Ovary (tissue), 10 donors: ENCODE measurements at regions of chr12 and their contacts with region 1.

Region 1: DNA sequence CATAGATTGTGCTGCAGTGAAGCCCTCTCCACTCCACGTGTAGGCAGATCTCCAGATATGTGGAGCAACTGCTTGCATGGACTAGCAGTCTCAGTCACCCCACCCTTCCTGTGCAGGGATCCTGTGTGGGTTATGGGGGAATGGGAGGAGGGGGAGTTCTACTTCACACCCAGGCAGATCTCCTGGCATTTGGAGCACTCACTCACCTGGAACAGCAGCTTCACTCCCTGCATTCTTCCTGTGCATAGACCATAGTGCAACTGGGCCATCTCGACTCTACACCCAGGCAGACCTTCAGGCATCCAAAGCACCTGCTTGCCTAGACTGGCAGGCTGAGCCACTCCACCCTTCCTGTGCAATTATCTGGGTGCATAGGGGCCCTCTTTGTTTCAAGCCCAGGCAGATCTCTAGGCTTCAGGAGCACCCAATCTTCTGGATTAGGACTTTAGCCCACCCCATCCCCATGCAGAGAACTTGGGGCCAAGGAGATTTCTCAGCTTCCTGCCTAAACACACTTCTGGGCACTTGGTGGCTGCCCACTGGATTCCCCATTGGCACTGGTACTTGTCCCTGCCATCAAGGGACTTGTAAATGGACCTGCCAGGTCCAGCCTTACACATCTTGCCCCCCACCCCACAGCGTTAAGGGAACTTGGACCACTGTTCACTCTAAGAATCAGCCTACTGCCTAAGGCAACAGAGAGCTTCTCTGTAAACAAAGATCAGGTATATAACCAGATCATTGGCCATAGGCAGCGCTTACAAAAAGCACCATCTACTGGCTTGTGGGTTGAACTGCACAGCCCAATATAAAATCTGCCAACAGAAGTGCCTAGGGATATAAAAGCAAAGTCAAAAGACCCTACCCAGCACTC is 95.8 kb upstream of the PCED1B start:
- DNase-seq: peak in 1 of 5 donors; percentile 27
- H3K4me3 ChIP-seq: no peak overlapping the region
- H3K27ac ChIP-seq: no peak overlapping the region
- H3K4me1 ChIP-seq: no peaks in the 10 kb centered on the region
- H3K27me3 ChIP-seq: no peaks in the 10 kb centered on the region
- CTCF ChIP-seq: peak in 1 of 3 donors; percentile 32
- EP300 ChIP-seq: no peak
- POLR2A ChIP-seq: no peak

Region 2: DNA sequence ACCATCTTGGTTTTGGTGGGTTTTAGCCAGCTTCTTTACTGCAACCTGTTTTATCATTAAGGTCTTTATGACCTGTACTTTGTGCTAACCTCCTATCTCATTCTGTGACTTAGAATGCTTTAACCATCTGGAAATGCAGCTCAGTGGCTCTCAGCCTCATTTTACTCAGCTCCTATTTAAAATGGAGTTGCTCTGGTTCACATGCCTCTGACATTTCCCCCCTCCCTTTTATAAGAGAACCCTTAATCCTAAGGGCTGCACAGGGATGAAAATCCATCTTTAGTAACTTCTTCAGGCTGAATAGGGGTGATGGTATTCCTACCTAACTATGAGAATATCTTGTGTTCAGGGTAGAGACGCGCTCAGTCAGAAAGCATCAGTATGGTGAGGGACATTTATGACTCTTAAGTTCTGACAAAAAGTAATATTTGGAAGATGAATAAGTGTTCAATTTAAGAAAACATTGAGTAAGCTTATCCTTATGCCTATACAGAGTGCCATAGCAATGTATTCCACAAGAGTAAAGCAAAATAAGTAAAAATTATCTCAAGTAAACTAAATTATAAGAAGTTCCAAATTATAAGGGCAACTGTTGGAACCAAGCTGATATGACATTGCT is 730.0 kb before region 1 on chr12:
- intact Hi-C with region 1: loop called in 1 of 4 experiments (anchors 5 kb)
- DNase-seq: no peak
- H3K4me3 ChIP-seq: no peak overlapping the region
- H3K27ac ChIP-seq: no peak overlapping the region
- H3K4me1 ChIP-seq: no peaks in the 10 kb centered on the region
- H3K27me3 ChIP-seq: no peaks in the 10 kb centered on the region
- CTCF ChIP-seq: no peak
- EP300 ChIP-seq: no peak
- POLR2A ChIP-seq: no peak